ENCODE measurements at regions of chr10 and their contacts with region 1.

Region 1: DNA sequence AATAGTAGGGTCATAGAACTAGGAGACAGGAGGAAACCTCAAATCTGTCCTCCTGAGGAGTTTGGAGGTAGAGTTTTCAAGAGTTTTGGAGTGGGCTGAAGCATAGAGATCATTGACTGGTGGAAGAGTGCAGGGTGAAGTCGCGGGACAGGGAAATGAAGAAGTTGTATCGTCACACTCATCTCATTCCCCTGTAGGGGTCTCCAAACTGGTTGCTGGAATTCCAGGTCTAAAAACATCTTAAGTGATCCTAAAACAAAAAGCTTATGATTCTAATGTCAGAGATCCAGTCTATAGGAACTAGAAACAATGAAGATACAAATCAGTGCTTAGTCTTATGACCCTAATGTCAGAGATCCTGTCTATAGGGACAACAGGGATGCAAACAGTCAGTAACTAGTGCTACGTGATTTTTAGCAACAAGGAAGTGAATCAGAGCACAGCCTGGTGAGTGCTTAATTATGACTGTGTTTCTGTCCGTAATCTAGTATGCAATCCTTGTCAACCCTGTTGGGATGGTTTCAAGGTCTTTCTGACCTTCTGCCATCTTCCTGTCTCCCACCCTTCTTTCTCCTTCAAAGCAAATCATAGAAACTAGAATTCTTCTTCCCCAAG is 139.4 kb downstream of the SKIDA1 start:
- DNase-seq: no peak
- H3K4me3 ChIP-seq: no peak overlapping the region
- H3K27ac ChIP-seq: no peak overlapping the region
- H3K4me1 ChIP-seq: no peaks in the 10 kb centered on the region
- H3K27me3 ChIP-seq: no peaks in the 10 kb centered on the region
- CTCF ChIP-seq: no peak

Region 2: DNA sequence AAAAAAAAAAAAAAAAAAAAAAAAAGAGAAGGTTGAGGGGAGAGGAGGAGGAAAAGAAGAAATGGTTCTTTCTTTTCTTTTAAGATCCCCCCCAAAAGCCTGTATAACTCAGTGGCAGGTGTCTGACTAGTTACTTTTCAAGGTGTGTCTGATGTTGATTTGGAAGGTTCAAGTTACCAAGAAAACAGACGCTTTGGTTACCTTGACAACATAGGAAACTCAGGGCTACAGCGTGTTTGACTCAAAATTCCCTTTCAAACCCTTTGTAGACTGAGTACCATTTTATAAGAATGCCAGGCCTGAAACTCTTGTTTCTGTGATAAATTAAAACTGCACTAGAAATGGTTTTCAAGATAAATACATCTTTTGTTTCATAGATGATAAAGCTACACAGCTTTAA is 147.4 kb before region 1 on chr10:
- CTCF ChIA-PET with region 1: no interaction called
- POLR2A ChIA-PET with region 1: interaction called, 30 read pairs
- intact Hi-C with region 1: no loop called
- DNase-seq: no peak
- H3K4me3 ChIP-seq: no peak overlapping the region
- H3K27ac ChIP-seq: peak overlapping the region; percentile 78
- H3K4me1 ChIP-seq: peaks cover 25% of the 10 kb centered on the region
- H3K27me3 ChIP-seq: no peaks in the 10 kb centered on the region
- CTCF ChIP-seq: no peak

Region 3: DNA sequence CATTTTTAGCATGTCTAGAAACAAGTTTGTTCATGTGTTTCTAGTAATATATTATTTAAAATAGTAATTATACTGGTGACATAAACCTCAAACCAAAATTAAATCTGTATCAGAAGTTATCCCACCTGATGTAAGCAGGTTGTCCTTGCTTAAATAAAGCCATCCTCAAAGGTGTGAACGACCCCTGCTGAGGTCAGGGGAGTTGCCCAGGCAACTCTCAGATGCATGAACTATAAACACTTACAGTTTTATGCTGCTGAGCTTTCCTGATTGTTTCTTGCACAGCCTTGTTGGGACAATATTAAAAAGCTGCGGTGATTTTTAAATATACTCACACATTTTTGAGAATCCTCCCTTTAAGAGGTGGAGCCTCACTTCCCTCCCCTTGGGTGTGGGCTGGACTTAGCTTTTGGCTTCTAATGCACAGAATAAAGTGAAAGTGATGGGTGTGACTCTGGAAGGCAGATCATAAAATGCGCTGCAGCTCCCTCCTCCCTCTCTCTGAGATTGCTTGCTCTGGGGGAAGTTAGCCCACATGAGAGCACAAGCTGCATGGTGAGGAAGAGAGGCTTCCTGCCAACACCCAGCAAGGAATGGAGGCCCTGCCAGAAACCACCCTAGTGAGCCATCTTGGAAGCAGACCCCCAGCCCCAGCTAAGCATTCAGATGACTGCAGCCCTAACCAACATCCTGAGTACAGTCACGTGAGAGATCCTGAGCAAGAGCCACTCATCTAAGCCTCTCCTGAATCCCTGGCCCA is 13.3 kb before region 1 on chr10:
- CTCF ChIA-PET with region 1: no interaction called
- POLR2A ChIA-PET with region 1: interaction called, 23 read pairs
- intact Hi-C with region 1: no loop called
- DNase-seq: peak; percentile 62 to 78
- H3K4me3 ChIP-seq: peak overlapping the region; percentile 43; the same call in 1 of the 2 replicates
- H3K27ac ChIP-seq: peak overlapping the region; percentile 34; the same call in 1 of the 2 replicates
- H3K4me1 ChIP-seq: peaks cover 17% of the 10 kb centered on the region; the same call in 1 of the 2 replicates
- H3K27me3 ChIP-seq: no peaks in the 10 kb centered on the region
- CTCF ChIP-seq: no peak

Measured in PC-9 (cell line).